Naive thymus-derived CD4-positive, alpha-beta T cell (primary cell): ENCODE measurements at regions of chr18 and their contacts with region 1.

Region 1: DNA sequence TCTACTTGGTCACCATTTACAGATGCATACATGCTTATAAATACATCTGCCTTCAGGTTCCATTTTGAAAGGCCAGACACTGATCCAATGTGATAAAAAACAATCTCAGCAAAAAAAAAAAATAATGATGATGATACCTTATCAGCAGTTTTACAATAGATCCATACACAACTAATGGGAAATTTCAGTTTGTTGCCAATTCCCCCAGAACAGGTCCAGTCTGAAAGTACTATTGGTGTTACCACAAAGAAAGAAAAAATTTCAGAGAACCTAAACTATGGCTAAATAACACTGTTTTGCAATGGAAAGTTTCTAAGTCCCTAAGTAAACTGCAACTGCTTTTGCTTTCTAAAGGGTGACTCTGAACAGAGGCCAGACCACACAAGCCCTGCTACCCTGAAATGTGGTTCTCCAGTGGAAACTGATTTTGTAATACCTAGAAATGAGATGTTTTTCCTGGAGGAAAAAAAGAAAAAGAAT is 54.1 kb downstream of the LPIN2 start:
- DNase-seq: peak in 1 of 9 donors; percentile 61
- ATAC-seq: no peak
- H3K4me3 ChIP-seq: peak overlapping the region; percentile 8
- H3K4me3 Mint-ChIP-seq: peak overlapping the region; percentile 1 to 85 (median 66)
- H3K27ac ChIP-seq: peak overlapping the region; percentile 68
- H3K27ac Mint-ChIP-seq: peak overlapping the region; percentile 96 to 100 (median 99)
- H3K4me1 ChIP-seq: peaks cover 83 to 85% of the 10 kb centered on the region in 2 donors
- H3K4me1 Mint-ChIP-seq: peaks cover 46 to 97% (median 93%) of the 10 kb centered on the region in 7 donors
- H3K27me3 ChIP-seq: no peaks in the 10 kb centered on the region
- H3K27me3 Mint-ChIP-seq: no peaks in the 10 kb centered on the region

Region 2: DNA sequence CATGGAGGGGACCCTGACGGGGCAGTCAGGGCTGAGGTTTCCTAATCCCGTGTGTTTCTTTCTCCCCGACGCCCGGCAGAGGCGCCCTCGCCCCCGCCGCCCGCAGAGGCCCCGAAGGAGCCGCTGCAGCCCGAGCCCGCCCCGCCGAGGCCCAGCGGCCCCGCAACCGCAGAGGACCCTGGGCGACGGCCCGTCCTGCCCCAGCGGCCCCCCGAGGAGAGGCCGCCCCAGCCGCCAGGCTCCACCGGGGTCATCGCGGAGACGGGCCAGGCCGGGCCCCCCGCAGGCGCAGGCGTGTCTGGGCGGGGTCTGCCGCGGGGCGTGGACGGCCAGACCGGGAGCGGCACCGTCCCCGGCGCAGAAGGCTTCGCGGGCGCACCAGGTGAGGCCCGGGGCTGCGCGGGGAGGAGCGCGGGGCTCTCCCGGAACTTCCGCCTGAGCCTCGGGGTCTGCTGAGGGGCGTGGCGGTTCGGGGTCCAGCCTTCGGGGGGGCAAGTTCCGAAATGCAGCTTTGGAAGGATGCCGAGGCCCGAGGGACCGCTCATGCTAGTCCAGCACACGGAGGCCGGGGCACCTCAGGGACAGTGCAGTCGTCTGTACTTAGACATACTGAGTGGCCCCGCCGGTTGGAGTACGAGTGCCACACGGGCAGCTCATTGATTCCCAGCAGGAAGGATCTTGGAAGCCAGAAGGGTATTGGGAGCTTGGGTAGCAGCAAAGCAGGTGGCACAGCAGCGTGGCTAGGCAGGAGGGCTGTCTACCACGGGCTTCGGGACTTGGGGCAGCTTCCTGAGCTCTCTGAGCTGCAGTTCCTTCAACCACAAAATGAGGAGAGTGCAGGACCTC is 51.9 kb before region 1 on chr18:
- CTCF ChIA-PET with region 1: no interaction called
- POLR2A ChIA-PET with region 1: interaction called, 3 read pairs
- intact Hi-C with region 1: loop called in 1 of 2 experiments (anchors 2 kb)
- DNase-seq: peak; percentile 33 to 76 (median 50)
- ATAC-seq: peak; percentile 79
- H3K4me3 ChIP-seq: peak overlapping the region; percentile 64
- H3K4me3 Mint-ChIP-seq: peak overlapping the region; percentile 76 to 90 (median 84)
- H3K27ac ChIP-seq: peak overlapping the region; percentile 66
- H3K27ac Mint-ChIP-seq: peak overlapping the region; percentile 49 to 90 (median 76)
- H3K4me1 ChIP-seq: peaks cover 9 to 11% of the 10 kb centered on the region in 2 donors
- H3K4me1 Mint-ChIP-seq: peaks cover 0 to 32% (median 24%) of the 10 kb centered on the region in 7 donors
- H3K27me3 ChIP-seq: no peaks in the 10 kb centered on the region
- H3K27me3 Mint-ChIP-seq: no peaks in the 10 kb centered on the region

Region 3: GRCh38 chr18:2939317-2939716 is 19.5 kb before region 1 on chr18:
- CTCF ChIA-PET with region 1: interaction called, 3 read pairs
- POLR2A ChIA-PET with region 1: interaction called, 11 read pairs
- intact Hi-C with region 1: no loop called
- DNase-seq: no peak
- ATAC-seq: no peak
- H3K4me3 ChIP-seq: no peak overlapping the region
- H3K4me3 Mint-ChIP-seq: no peak overlapping the region
- H3K27ac ChIP-seq: no peak overlapping the region
- H3K27ac Mint-ChIP-seq: peak overlapping the region in 5 of 9 donors; percentile 48 to 75 (median 64)
- H3K4me1 ChIP-seq: no peaks in the 10 kb centered on the region
- H3K4me1 Mint-ChIP-seq: peaks cover 8 to 56% (median 33%) of the 10 kb centered on the region in 7 donors
- H3K27me3 ChIP-seq: no peaks in the 10 kb centered on the region
- H3K27me3 Mint-ChIP-seq: no peaks in the 10 kb centered on the region

Region 4: DNA sequence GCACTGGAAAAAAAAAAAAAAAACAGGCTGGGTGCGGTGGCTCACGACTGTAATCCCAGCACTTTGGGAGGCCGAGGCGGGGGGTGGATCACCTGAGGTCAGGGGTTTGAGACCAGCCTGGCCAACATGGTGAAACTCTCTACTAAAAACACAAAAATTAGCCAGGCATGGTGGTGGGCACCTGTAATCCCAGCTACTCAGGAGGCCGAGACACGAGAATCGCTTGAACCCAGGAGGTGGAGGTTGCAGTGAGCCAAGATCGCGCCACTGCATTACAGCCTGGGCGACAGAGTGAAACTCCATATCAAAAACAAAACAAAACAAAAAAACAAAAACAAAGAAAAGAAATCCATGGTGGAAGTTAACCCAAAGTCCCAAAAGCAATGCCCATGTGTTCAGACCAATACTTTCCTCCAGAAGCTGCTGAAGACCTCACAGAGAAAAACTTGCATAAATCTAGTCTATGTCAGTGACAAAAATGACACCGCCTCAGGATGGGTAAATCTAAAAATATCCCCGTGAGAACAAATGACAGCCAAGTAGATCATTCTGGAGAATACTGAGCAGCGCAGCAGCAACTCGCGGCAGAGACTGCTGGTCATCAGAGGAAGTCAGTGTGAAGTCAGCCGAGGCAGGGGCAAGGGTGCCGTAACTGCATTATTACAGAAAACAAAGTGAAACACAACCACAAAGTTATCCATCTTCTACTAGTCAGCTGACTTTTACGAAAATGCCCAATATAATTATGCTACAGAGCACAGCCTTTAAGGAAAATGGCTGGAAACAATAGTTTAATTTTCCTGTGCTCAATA is 13.1 kb after region 1 on chr18:
- CTCF ChIA-PET with region 1: interaction called, 27 read pairs
- POLR2A ChIA-PET with region 1: interaction called, 335 read pairs
- intact Hi-C with region 1: loop called (anchors 1 kb)
- DNase-seq: peak in 7 of 9 donors; percentile 40 to 80 (median 62)
- ATAC-seq: peak; percentile 84
- H3K4me3 ChIP-seq: peak overlapping the region; percentile 45
- H3K4me3 Mint-ChIP-seq: peak overlapping the region; percentile 75 to 93 (median 88)
- H3K27ac ChIP-seq: peak overlapping the region; percentile 76
- H3K27ac Mint-ChIP-seq: peak overlapping the region; percentile 90 to 99 (median 96)
- H3K4me1 ChIP-seq: peaks cover 75 to 82% of the 10 kb centered on the region in 2 donors
- H3K4me1 Mint-ChIP-seq: peaks cover 63 to 97% (median 93%) of the 10 kb centered on the region in 7 donors
- H3K27me3 ChIP-seq: no peaks in the 10 kb centered on the region
- H3K27me3 Mint-ChIP-seq: no peaks in the 10 kb centered on the region

Region 5: GRCh38 chr18:2985628-2986027 is 26.8 kb after region 1 on chr18:
- CTCF ChIA-PET with region 1: interaction called, 49 read pairs
- POLR2A ChIA-PET with region 1: interaction called, 335 read pairs
- intact Hi-C with region 1: loop called (anchors 1 kb)
- DNase-seq: peak in 7 of 9 donors; percentile 56 to 75 (median 66)
- ATAC-seq: peak; percentile 79
- H3K4me3 ChIP-seq: no peak overlapping the region
- H3K4me3 Mint-ChIP-seq: peak overlapping the region in 1 of 10 donors; percentile 27
- H3K27ac ChIP-seq: no peak overlapping the region
- H3K27ac Mint-ChIP-seq: peak overlapping the region in 7 of 9 donors; percentile 0 to 98 (median 67)
- H3K4me1 ChIP-seq: peaks cover 19 to 41% of the 10 kb centered on the region in 2 donors
- H3K4me1 Mint-ChIP-seq: peaks cover 34 to 80% (median 73%) of the 10 kb centered on the region in 7 donors
- H3K27me3 ChIP-seq: no peaks in the 10 kb centered on the region
- H3K27me3 Mint-ChIP-seq: no peaks in the 10 kb centered on the region

Region 6: GRCh38 chr18:3012964-3013804 is 54.3 kb after region 1 on chr18 and contains the start of gene LPIN2:
- CTCF ChIA-PET with region 1: no interaction called
- POLR2A ChIA-PET with region 1: interaction called, 3 read pairs
- intact Hi-C with region 1: loop called (anchors 1 kb)
- DNase-seq: peak; percentile 96 to 98 (median 98)
- ATAC-seq: peak; percentile 92
- H3K4me3 ChIP-seq: peak within 1 kb of the TSS; percentile 61
- H3K4me3 Mint-ChIP-seq: peak within 1 kb of the TSS; percentile 93 to 99 (median 95)
- H3K27ac ChIP-seq: peak within 1 kb of the TSS; percentile 84
- H3K27ac Mint-ChIP-seq: peak within 1 kb of the TSS; percentile 91 to 98 (median 95)
- H3K4me1 ChIP-seq: peaks cover 8 to 61% of the 10 kb centered on the region in 2 donors
- H3K4me1 Mint-ChIP-seq: peaks cover 56 to 79% (median 74%) of the 10 kb centered on the region in 7 donors
- H3K27me3 ChIP-seq: no peaks in the 10 kb centered on the region
- H3K27me3 Mint-ChIP-seq: no peaks in the 10 kb centered on the region
- total RNA-seq, gene LPIN2: 58.8 to 133 (median 73.6) TPM